Activated CD4-positive, alpha-beta T cell treated with anti-CD3 and anti-CD28 coated beads for 36 hours (primary cell): ENCODE measurements at regions of chr6 and their contacts with region 1.

Region 1: DNA sequence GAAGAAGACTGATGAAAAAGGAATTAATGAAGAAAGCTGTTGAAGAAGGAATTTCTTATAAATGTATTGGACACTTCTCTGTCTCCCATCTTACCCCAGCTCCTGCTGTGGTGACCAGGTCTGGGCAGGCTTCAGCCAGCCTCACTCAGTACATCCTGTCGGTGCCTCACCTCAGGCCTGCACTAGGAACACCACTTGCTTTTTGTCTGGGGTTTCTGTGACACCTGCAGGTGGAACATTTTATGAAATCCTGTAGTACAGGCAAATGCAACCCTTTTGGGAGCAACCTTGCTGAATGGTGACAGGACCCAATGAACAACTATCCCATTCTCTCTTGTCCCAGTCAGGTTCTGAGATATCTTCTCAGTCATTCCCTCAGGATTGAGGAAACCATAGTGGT is 129.7 kb downstream of the PRDM13 start:
- DNase-seq: no peak
- ATAC-seq: no peak
- H3K4me3 Mint-ChIP-seq: no peak overlapping the region
- H3K27ac Mint-ChIP-seq: no peak overlapping the region
- H3K4me1 Mint-ChIP-seq: no peaks in the 10 kb centered on the region
- H3K27me3 Mint-ChIP-seq: peaks cover 28% of the 10 kb centered on the region

Region 2: GRCh38 chr6:99568103-99568933 is 168.0 kb before region 1 on chr6 and contains the start of gene CCNC:
- CTCF ChIA-PET with region 1: no interaction called
- POLR2A ChIA-PET with region 1: no interaction called
- intact Hi-C with region 1: no loop called
- DNase-seq: peak; percentile 94
- ATAC-seq: peak; percentile 98
- H3K4me3 Mint-ChIP-seq: peak within 1 kb of the TSS; percentile 97
- H3K27ac Mint-ChIP-seq: peak within 1 kb of the TSS; percentile 98
- H3K4me1 Mint-ChIP-seq: peaks cover 25% of the 10 kb centered on the region
- H3K27me3 Mint-ChIP-seq: no peaks in the 10 kb centered on the region
- total RNA-seq, gene CCNC: 50.7 to 67.3 TPM

Region 3: DNA sequence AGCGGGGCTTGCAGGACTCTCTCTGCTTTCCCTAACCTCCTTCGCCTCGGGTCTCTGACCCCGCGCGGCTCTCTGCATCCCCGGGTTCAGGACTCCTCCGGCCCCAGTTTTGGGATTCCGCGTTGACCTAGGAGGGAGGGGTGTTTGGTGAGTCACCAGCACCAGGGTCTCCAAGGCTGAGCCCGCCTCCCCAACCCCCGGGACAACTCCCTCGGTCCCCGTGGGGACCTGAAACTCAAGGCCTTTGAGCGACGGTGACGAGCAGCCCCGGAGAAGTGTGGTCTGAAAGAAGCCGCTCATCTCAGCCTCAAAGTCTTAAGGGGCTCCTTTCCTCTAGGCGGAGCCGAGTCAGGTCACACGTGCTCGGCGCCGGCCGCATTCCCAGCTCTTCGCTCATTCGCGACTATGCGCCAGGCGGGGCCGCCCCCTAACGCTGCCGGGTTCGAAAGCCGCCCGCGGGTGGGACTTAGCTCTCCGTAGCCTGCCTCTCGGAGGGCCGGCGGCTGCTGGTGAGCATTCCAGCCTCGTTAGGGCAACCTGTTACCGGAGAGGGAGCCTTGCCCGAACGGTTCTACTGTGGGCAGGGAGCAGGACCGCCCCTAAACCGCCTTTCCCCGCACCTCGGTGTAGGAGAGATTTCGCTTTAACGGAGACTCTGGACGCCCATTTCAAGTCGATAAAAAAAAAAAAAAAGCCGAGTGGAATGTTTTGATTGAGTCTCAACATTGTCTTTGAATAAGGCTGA is 132.7 kb before region 1 on chr6:
- CTCF ChIA-PET with region 1: no interaction called
- POLR2A ChIA-PET with region 1: no interaction called
- intact Hi-C with region 1: no loop called
- DNase-seq: peak; percentile 56
- ATAC-seq: peak; percentile 51
- H3K4me3 Mint-ChIP-seq: peak overlapping the region; percentile 51
- H3K27ac Mint-ChIP-seq: no peak overlapping the region
- H3K4me1 Mint-ChIP-seq: peaks cover 30% of the 10 kb centered on the region
- H3K27me3 Mint-ChIP-seq: peaks cover 79% of the 10 kb centered on the region

Region 4: GRCh38 chr6:99746261-99746895 is 10.1 kb after region 1 on chr6:
- CTCF ChIA-PET with region 1: interaction called, 13 read pairs
- POLR2A ChIA-PET with region 1: no interaction called
- intact Hi-C with region 1: no loop called
- DNase-seq: peak; percentile 61
- ATAC-seq: peak; percentile 73
- H3K4me3 Mint-ChIP-seq: no peak overlapping the region
- H3K27ac Mint-ChIP-seq: no peak overlapping the region
- H3K4me1 Mint-ChIP-seq: no peaks in the 10 kb centered on the region
- H3K27me3 Mint-ChIP-seq: peaks cover 21% of the 10 kb centered on the region

Region 5: GRCh38 chr6:99761711-99762110 is 25.4 kb after region 1 on chr6:
- CTCF ChIA-PET with region 1: no interaction called
- POLR2A ChIA-PET with region 1: no interaction called
- intact Hi-C with region 1: no loop called
- DNase-seq: no peak
- ATAC-seq: no peak
- H3K4me3 Mint-ChIP-seq: no peak overlapping the region
- H3K27ac Mint-ChIP-seq: no peak overlapping the region
- H3K4me1 Mint-ChIP-seq: no peaks in the 10 kb centered on the region
- H3K27me3 Mint-ChIP-seq: peaks cover 6% of the 10 kb centered on the region